HepG2 (cell line): ENCODE measurements at regions of chr10 and their contacts with region 1.

Region 1: DNA sequence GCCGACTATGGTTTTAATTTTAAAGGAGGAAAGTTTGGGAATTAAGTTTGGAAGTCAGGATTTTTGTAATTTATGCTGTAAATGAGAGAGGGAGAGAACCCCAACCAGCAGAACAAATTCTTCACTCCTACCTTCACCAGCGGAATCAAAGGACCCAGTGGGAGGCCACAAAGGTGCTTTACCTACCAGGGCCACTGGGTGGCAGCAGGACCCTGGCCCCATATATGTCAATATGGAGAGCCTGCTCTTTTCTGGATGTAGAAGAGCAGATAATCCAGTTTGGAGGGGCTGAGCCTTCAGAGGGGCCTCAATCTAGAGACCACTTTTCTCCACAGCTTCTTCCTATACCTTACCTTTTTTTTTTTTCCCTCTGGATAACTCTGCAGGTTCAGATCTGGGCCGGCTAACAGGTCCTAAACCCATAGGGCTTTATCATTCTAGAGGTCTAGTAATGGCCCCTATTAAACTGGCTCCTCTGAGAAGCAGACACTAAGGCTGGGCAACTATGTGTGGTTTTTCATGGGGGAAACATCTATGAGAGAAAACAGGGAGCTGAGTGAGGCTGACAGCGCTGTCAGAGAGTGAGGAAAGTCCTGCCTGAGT is 8.5 kb upstream of the SCD start:
- DNase-seq: peak; percentile 60
- ATAC-seq: peak; percentile 22; the same call in 2 of the 3 replicates
- H3K4me3 ChIP-seq: no peak overlapping the region
- H3K27ac ChIP-seq: no peak overlapping the region
- H3K4me1 ChIP-seq: peaks cover 52% of the 10 kb centered on the region
- H3K27me3 ChIP-seq: no peaks in the 10 kb centered on the region
- CTCF ChIP-seq: peak; percentile 91
- EP300 ChIP-seq: no peak
- POLR2A ChIP-seq: no peak
- RAD21 ChIP-seq: peak; percentile 86

Region 2: GRCh38 chr10:100303724-100304319 is 34.7 kb before region 1 on chr10:
- CTCF ChIA-PET with region 1: interaction called, 3 read pairs
- POLR2A ChIA-PET with region 1: no interaction called
- in situ Hi-C with region 1: no loop called
- intact Hi-C with region 1: loop called (anchors 2 kb)
- DNase-seq: peak; percentile 23
- ATAC-seq: peak; percentile 66; the same call in 2 of the 3 replicates
- H3K4me3 ChIP-seq: no peak overlapping the region
- H3K27ac ChIP-seq: no peak overlapping the region
- H3K4me1 ChIP-seq: peaks cover 41% of the 10 kb centered on the region
- H3K27me3 ChIP-seq: 0 out of 5 replicates have a peak, but pooled peaks cover 0 to 6% of the 10 kb centered on the region in 2 experiments
- CTCF ChIP-seq: peak; percentile 77
- EP300 ChIP-seq: no peak
- POLR2A ChIP-seq: no peak
- RAD21 ChIP-seq: peak; percentile 52

Region 3: GRCh38 chr10:100373298-100374136 is 35.0 kb after region 1 on chr10:
- CTCF ChIA-PET with region 1: interaction called, 4 read pairs
- POLR2A ChIA-PET with region 1: interaction called, 287 read pairs
- in situ Hi-C with region 1: no loop called
- intact Hi-C with region 1: loop called (anchors 1 kb)
- DNase-seq: peak; percentile 99
- ATAC-seq: peak; percentile 88
- H3K4me3 ChIP-seq: peak overlapping the region; percentile 65 to 82 (median 74)
- H3K27ac ChIP-seq: peak overlapping the region; percentile 100
- H3K4me1 ChIP-seq: peaks cover 44% of the 10 kb centered on the region
- H3K27me3 ChIP-seq: peaks cover 0 to 4% of the 10 kb centered on the region in 2 experiments; a peak in 1 of 5 replicates
- CTCF ChIP-seq: no peak
- EP300 ChIP-seq: peak; percentile 67 to 85; a peak in 3 of 4 replicates
- POLR2A ChIP-seq: peak; percentile 19 to 87; a peak in 3 of 4 replicates
- RAD21 ChIP-seq: no peak; the same call in 1 of the 2 replicates

Region 4: GRCh38 chr10:100433253-100434240 is 95.0 kb after region 1 on chr10:
- CTCF ChIA-PET with region 1: interaction called, 297 read pairs
- POLR2A ChIA-PET with region 1: interaction called, 5 read pairs
- in situ Hi-C with region 1: loop called (anchors 5 kb)
- intact Hi-C with region 1: loop called (anchors 1 kb)
- DNase-seq: peak; percentile 89
- ATAC-seq: peak; percentile 93
- H3K4me3 ChIP-seq: no peak overlapping the region
- H3K27ac ChIP-seq: no peak overlapping the region
- H3K4me1 ChIP-seq: peaks cover 13% of the 10 kb centered on the region; the same call in 1 of the 2 replicates
- H3K27me3 ChIP-seq: no peaks in the 10 kb centered on the region
- CTCF ChIP-seq: peak; percentile 99
- EP300 ChIP-seq: no peak
- POLR2A ChIP-seq: no peak
- RAD21 ChIP-seq: peak; percentile 98

Region 5: DNA sequence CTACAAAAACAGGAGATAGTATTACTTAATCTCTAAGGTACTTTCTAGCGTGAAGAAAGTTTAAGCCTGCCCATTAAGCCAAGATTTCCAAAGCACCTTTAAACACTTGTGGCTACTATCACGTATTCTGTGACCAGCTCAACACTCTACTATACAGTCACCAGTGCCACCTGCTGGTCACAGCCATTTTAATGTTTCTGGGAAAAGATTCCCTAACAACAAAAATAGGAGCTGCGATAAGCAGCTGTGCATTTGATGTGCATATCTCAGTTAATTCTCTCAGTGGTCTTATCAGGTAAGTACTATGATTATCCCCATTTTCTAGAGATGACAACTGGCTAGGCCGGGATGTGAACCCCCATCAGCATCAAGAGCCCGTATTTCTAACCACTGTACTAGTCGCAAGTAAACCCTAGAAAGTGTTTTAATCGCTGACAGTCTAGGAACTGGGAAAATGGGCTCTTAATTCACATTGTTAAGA is 180.3 kb after region 1 on chr10:
- CTCF ChIA-PET with region 1: interaction called, 11 read pairs
- POLR2A ChIA-PET with region 1: no interaction called
- in situ Hi-C with region 1: no loop called
- intact Hi-C with region 1: no loop called
- DNase-seq: peak; percentile 65
- ATAC-seq: peak; percentile 76
- H3K4me3 ChIP-seq: peak overlapping the region; percentile 41 to 78 (median 60); a peak in 5 of 6 replicates
- H3K27ac ChIP-seq: no peak overlapping the region
- H3K4me1 ChIP-seq: peaks cover 14% of the 10 kb centered on the region
- H3K27me3 ChIP-seq: no peaks in the 10 kb centered on the region
- CTCF ChIP-seq: peak; percentile 77
- EP300 ChIP-seq: no peak
- POLR2A ChIP-seq: no peak
- RAD21 ChIP-seq: no peak